Endothelial cell of umbilical vein (primary cell): ENCODE measurements at regions of chr1 and their contacts with region 1.

Region 1: DNA sequence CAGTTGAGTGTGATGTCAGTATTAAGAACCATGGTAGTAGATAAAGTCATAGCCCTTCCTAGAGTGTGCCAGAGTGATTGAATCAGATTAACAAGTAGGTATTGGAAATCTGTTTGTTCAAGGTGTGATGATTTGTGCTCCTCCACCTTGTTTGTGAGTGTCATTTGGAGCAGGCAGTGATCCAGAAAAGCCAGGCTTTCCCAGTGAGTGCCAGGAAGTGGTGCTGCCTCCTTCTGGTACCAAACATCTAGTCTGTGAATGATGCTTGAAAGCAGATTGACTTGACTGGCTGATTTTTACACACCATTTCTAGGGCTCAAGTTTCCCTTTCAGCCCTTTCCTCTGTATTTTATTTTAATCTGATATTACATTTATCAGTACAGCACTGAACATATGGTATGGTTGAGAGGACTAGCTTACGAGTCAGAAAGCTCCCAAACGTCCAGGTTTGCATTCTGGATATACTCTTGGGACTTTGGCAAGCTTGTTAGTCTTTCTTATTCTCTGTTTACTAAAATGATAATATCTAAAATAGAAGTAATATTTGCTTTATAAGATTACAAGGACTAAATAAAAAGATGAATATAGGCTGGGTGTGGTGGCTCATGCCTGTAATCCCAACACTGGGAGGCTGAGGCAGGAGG is 100.7 kb downstream of the PATJ start:
- DNase-seq: peak; percentile 40
- H3K4me3 ChIP-seq: no peak overlapping the region
- H3K27ac ChIP-seq: no peak overlapping the region
- H3K4me1 ChIP-seq: peaks cover 17% of the 10 kb centered on the region
- H3K27me3 ChIP-seq: no peaks in the 10 kb centered on the region
- CTCF ChIP-seq: peak; percentile 22 to 35
- POLR2A ChIP-seq: no peak

Region 2: GRCh38 chr1:61606448-61607312 is 236.3 kb before region 1 on chr1:
- CTCF ChIA-PET with region 1: no interaction called
- POLR2A ChIA-PET with region 1: no interaction called
- dilution Hi-C with region 1: no loop called
- intact Hi-C with region 1: loop called (anchors 2 kb)
- DNase-seq: peak; percentile 92
- H3K4me3 ChIP-seq: peak overlapping the region in 1 of 3 experiments; percentile 31
- H3K27ac ChIP-seq: peak overlapping the region; percentile 86
- H3K4me1 ChIP-seq: peaks cover 22% of the 10 kb centered on the region
- H3K27me3 ChIP-seq: no peaks in the 10 kb centered on the region
- CTCF ChIP-seq: no peak
- POLR2A ChIP-seq: no peak

Region 3: GRCh38 chr1:61724813-61725694 is 117.9 kb before region 1 on chr1 and contains the start of gene TM2D1:
- CTCF ChIA-PET with region 1: no interaction called
- POLR2A ChIA-PET with region 1: no interaction called
- dilution Hi-C with region 1: no loop called
- intact Hi-C with region 1: loop called (anchors 2 kb)
- DNase-seq: peak; percentile 88
- H3K4me3 ChIP-seq: peak within 1 kb of the TSS; percentile 81 to 97 (median 87)
- H3K27ac ChIP-seq: peak within 1 kb of the TSS; percentile 97
- H3K4me1 ChIP-seq: peaks cover 18% of the 10 kb centered on the region
- H3K27me3 ChIP-seq: no peaks in the 10 kb centered on the region
- CTCF ChIP-seq: no peak
- POLR2A ChIP-seq: peak; percentile 99
- total RNA-seq, gene TM2D1: 37.5 and 46.1 TPM in 2 replicates

Region 4: GRCh38 chr1:61741711-61742619 is 101.0 kb before region 1 on chr1 and contains the start of gene PATJ:
- CTCF ChIA-PET with region 1: no interaction called
- POLR2A ChIA-PET with region 1: no interaction called
- dilution Hi-C with region 1: no loop called
- intact Hi-C with region 1: loop called (anchors 5 kb)
- DNase-seq: peak; percentile 28
- H3K4me3 ChIP-seq: peak within 1 kb of the TSS; percentile 21 to 76 (median 47)
- H3K27ac ChIP-seq: peak within 1 kb of the TSS; percentile 40
- H3K4me1 ChIP-seq: no peaks in the 10 kb centered on the region
- H3K27me3 ChIP-seq: no peaks in the 10 kb centered on the region
- CTCF ChIP-seq: no peak
- POLR2A ChIP-seq: no peak
- total RNA-seq, gene PATJ: 3.0 and 4.2 TPM in 2 replicates